HepG2 (cell line): ENCODE measurements at regions of chr10 and their contacts with region 1.

Region 1: DNA sequence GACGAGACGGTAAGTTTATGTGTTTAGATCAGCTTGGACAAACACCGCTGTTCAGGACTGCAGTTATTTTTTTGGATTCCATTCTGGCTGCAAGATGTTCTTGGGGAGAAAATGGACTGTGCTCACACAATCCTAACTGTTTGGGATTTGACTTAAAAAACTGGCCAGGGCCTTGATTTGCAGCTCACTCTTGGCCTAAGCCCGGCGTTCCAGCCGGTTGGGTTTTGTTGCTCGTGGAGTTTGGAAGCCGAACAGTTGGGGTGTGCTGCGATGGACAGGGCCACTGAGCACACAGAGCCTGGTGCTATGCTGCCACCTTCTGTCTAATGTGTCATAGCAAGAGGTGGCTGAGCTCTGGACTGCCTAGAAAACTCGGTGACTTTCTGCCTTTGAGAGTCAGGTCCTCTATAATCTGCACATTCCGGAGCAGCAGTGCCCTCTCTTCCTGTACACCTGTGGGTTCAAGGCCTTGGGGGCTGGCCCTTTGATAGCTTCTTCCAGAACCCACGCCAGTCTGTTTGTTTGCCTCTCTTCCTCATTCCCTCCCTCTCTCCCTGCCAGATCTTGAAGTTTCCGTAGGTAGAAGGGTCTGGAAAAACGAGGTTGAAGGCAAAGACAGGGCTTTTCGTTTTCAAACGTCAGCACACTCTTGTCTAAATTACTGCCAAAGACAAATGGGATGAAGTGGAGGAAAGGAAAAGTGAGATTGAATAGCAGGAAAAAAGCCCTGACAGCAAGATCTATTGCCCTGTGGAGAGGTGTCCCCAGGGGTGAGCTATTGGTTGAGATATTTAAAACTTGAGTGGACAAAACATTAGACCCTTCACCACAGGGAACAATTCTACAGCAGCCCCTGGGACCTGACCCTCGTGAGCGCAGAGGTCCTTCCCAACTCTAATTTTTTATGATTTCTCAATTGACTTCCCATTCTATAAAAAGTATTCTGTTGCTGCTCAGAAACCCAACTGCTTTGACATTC is 167.5 kb upstream of the HABP2 start:
- DNase-seq: peak; percentile 71
- ATAC-seq: peak; percentile 100
- H3K4me3 ChIP-seq: peak overlapping the region in 1 of 3 experiments; percentile 15; a peak in 2 of 6 replicates
- H3K27ac ChIP-seq: no peak overlapping the region
- H3K4me1 ChIP-seq: peaks cover 13% of the 10 kb centered on the region
- H3K27me3 ChIP-seq: peaks cover under 1 to 63% of the 10 kb centered on the region in 2 experiments; a peak in 4 of 5 replicates
- CTCF ChIP-seq: peak; percentile 96
- EP300 ChIP-seq: no peak
- POLR2A ChIP-seq: no peak
- RAD21 ChIP-seq: peak; percentile 90

Region 2: DNA sequence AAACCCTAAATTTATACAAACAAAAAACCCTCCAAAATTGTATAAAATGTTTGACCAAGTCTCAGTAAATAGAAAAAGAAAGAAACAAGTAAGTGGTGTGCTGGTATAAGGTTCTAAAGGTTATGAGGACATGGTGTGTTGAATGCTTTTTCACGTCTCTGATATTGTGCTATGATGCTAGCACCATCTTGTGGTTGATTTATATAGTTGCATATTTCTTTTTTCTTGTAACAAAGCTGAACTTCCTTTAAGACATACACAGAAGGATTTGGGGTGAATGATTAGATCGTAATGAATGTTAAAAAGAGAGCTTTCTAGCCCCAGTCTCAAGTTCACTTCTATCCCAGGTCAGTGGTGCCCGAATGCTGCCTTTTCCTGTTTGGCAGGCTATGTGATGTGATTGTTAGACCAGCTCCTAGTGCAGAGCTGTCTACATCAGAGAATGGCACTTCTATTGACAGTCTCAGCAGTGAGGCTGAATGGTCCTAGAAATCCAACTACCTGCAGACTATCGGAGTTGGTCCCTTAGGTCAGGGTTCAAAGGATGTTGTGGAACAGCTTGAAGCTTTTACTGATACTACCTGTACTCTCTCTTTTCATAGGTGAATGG is 913.3 kb before region 1 on chr10:
- CTCF ChIA-PET with region 1: interaction called, 6 read pairs
- POLR2A ChIA-PET with region 1: no interaction called
- in situ Hi-C with region 1: loop called (anchors 10 kb)
- intact Hi-C with region 1: loop called (anchors 1 kb)
- DNase-seq: peak; percentile 52
- ATAC-seq: peak; percentile 67
- H3K4me3 ChIP-seq: no peak overlapping the region
- H3K27ac ChIP-seq: no peak overlapping the region
- H3K4me1 ChIP-seq: peaks cover 17% of the 10 kb centered on the region
- H3K27me3 ChIP-seq: no peaks in the 10 kb centered on the region
- CTCF ChIP-seq: peak; percentile 77
- EP300 ChIP-seq: no peak
- POLR2A ChIP-seq: no peak
- RAD21 ChIP-seq: 0 out of 2 replicates have a peak, but pooled peaks have one; percentile 25

Region 3: DNA sequence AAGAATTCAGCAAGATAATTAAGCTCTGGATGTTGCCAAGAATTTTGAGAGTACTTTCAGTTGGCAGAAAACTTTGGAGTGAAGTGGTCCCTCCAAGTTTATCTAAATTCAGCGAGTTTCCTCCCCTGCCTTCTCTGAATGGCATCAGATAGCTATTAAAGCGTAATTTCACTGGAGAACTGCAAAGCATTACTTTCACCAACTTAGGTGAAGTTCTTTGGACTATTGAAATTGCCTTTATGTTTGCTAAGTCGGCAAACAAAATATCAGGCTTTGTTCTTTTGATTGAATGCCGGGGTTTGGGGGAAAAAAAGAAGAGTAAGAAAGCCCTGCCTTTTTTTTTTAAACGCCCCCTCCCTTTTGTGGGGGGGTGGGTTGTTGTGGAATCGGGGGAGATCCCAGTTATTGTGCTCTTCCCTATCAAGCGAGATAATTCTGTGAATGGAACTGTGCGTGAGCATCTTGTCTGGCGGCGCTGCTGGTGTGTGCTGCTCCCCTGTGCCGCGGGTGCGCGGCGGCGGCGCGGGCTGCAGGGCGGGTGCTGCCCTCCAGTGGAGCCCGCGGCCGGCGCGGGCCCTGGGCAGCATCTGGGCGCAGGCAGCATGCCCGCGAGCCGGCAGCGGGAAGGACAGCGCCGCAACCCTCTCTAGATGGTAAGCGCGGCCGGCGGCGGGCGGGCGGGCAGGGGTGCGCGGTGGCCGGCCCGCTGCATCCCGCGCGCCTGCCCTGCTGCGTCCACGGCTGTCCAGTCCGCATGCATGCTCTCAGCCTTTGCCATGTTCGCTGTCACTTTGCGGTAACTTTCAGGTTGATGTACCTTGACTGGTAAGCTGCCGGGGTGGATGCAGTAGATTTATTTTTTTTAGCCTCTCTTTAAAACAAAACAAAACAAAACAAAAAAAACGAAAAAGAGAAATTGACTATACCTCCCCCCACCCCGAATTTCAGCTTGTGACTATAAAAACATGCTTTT is 258.8 kb before region 1 on chr10:
- CTCF ChIA-PET with region 1: no interaction called
- POLR2A ChIA-PET with region 1: no interaction called
- in situ Hi-C with region 1: no loop called
- intact Hi-C with region 1: loop called (anchors 10 kb)
- DNase-seq: peak; percentile 15
- ATAC-seq: peak; percentile 99
- H3K4me3 ChIP-seq: peak overlapping the region in 1 of 3 experiments; percentile 19; a peak in 1 of 6 replicates
- H3K27ac ChIP-seq: no peak overlapping the region
- H3K4me1 ChIP-seq: peaks cover 30% of the 10 kb centered on the region
- H3K27me3 ChIP-seq: no peaks in the 10 kb centered on the region
- CTCF ChIP-seq: peak; percentile 49
- EP300 ChIP-seq: no peak
- POLR2A ChIP-seq: no peak
- RAD21 ChIP-seq: peak; percentile 84